ENCODE measurements at regions of chr11 and their contacts with region 1.

Region 1: DNA sequence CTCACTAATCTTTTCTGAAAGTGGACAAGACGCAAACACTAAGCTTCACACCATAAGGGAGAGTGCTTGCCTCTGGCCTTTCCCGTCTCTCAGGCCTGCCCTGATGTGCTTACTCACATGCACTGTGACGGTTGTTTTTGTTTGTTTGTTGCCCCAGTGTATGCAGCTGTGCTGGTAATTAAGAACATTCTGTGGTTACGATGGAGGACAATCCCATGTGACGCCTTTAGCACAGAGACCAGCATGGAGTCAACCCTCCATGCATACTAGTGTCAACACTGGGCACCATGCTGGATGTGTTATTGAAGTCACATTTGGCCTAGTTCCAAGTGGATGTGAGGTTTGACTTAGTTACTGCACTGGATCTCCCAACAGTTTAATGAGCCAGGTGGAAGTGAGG is 27.8 kb upstream of the CDON start:
- DNase-seq: no peak
- ATAC-seq: no peak
- H3K4me3 ChIP-seq: no peak overlapping the region
- H3K27ac ChIP-seq: no peak overlapping the region
- H3K4me1 ChIP-seq: no peaks in the 10 kb centered on the region
- H3K27me3 ChIP-seq: no peaks in the 10 kb centered on the region
- CTCF ChIP-seq: no peak

Region 2: DNA sequence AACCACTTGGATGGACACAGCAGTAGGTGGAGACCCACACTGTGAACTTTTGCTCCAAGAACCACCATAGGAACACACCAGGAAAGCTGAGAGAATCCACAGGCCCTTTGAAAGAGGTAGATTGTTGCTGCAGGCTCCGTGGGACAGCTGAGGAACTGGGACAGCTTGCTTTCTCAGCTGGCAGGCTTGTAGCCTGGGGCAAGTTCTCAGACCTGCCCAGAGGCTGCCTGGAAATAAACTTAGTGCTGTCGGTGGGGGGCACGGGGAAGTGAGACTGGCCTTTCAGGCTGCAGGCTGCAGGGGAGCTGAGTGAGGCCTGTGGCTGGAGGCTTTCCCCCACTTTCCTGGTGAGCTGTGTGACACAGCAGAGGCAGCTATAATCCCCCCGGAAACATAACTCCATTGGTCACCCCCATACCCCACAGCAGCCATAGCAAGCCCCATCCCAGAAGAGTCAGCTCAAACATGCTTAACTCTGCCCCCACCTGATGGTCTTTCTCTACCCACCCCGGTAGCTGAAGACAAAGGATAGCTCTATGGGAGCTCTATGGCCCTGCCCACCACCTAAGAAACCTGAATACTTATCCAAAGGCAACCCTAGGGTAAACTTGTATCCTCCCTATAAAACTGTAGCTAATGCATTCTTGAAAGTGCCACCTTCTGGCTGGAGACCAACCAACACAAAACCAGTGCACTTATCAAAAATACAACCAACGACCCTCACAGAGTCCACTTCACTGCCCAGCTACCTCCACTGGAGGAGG is 388.4 kb before region 1 on chr11:
- intact Hi-C with region 1: loop called in 1 of 10 experiments (anchors 5 kb)
- DNase-seq: no peak
- ATAC-seq: no peak
- H3K4me3 ChIP-seq: no peak overlapping the region
- H3K27ac ChIP-seq: no peak overlapping the region
- H3K4me1 ChIP-seq: no peaks in the 10 kb centered on the region
- H3K27me3 ChIP-seq: peaks cover 0 to 11% (median 0%) of the 10 kb centered on the region in 7 donors
- CTCF ChIP-seq: no peak

Region 3: DNA sequence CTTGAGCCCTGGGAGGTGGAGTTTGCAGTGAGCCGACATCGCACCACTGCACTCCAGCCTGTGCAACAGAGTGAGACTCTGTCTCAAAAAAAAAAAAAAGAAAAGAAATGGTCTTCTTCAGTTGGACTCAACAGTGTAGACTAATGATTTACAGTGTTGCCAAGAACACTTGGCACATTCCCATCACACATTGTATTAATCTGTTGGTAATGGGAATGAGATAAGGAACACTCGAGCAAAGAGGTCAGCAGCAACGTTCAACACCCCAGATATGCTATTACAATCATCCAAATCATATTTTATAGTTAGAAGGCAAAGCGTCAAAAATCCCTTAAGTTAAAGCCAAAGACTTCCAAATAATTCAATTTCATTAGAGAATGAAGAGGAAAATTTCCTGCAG is 42.3 kb before region 1 on chr11:
- intact Hi-C with region 1: no loop called
- DNase-seq: no peak
- ATAC-seq: peak in 4 of 8 donors; percentile 31 to 42 (median 38)
- H3K4me3 ChIP-seq: no peak overlapping the region
- H3K27ac ChIP-seq: no peak overlapping the region
- H3K4me1 ChIP-seq: peaks cover 0 to 10% (median 0%) of the 10 kb centered on the region in 9 donors
- H3K27me3 ChIP-seq: peaks cover 0 to 7% (median 0%) of the 10 kb centered on the region in 7 donors
- CTCF ChIP-seq: no peak